Esophagus muscularis mucosa (tissue), 4 donors: ENCODE measurements at regions of chr10 and their contacts with region 1.

Region 1: DNA sequence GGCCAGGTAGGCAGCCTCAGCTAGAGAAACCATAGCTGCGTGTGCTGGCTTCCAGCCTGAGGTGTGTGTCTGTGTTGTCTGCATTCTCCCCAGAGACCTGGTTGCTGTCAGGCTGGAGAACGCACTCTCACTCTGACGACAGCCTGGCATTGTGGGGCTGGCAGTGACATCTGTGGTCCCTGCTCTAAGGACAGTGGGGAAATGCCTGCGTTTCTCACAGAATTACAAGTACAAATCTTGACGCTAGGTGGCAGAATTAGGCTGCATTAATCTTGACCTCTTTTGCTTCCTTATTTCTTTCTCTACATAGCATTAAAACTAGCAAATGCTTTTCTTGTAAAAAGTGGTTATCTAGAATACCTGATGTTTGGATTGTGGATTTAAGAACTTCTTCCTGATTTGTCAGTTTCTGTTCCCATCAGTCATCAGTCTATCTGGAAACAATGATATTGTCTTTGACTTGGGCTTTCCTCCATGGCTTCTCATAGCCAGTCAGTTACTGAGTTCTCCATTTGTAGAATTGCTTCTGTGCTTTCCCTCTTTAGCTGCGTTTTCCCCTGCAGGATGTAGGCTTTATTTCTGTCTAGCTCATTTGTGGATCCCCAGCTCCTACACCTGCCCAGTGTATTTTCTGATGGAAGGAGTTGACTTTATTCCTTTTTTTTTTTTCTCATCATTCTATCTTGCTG is 86.0 kb downstream of the FANK1 start:
- DNase-seq: no peak
- H3K4me3 ChIP-seq: no peak overlapping the region
- H3K27ac ChIP-seq: no peak overlapping the region
- H3K4me1 ChIP-seq: no peaks in the 10 kb centered on the region
- H3K27me3 ChIP-seq: no peaks in the 10 kb centered on the region
- CTCF ChIP-seq: peak; percentile 51 to 61 (median 51)
- EP300 ChIP-seq: no peak
- POLR2A ChIP-seq: no peak

Region 2: DNA sequence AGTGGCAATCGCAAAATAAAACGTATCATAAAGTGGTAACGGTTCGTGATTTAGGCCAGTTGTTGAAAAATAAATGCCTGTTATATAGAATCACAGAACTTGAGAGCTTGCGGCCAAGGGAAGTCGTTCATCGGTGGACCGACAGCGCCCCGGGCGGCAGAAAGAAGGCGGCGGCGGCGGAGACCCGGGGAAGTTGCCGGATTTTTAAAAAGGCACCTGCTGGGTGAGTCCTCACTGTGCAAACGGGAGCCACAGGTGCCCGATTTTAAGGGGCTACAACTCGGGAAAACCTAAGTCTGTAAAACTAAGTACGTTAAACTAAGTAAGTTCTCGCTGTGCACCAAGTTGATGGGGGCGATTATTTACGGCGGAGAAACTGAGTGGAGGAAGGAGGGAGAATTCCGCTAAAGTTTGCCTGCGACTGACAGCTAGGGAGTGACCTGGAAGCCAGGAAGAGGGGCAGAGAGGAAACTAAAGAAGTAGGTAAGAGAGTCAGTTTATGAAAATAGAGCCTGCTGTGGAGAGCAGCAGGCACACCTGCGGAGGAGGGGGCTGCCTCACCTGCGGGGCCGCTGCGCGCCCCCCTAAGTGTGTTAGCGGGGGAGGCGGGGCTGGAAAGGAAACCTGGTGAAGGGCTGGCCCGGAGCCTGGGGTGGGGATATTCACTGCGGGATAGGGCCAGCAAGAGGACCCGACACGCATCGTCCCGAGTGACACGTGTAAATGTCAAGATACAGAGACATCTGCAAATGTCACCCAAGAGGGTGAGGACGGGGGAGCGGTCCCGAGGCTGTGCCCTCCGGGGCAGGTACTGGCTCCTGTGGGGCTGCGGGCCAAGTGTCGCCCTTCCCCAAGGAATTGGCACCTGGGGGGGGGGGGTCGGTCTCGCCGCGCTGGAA is 404.9 kb after region 1 on chr10:
- intact Hi-C with region 1: loop called (anchors 10 kb)
- DNase-seq: peak; percentile 92
- H3K4me3 ChIP-seq: peak overlapping the region; percentile 49 to 62 (median 52)
- H3K27ac ChIP-seq: no peak overlapping the region
- H3K4me1 ChIP-seq: peaks cover 8 to 27% (median 21%) of the 10 kb centered on the region in 4 donors
- H3K27me3 ChIP-seq: peaks cover 0 to 52% (median 4%) of the 10 kb centered on the region in 4 donors
- CTCF ChIP-seq: peak; percentile 47 to 59 (median 55)
- EP300 ChIP-seq: no peak
- POLR2A ChIP-seq: no peak

Region 3: DNA sequence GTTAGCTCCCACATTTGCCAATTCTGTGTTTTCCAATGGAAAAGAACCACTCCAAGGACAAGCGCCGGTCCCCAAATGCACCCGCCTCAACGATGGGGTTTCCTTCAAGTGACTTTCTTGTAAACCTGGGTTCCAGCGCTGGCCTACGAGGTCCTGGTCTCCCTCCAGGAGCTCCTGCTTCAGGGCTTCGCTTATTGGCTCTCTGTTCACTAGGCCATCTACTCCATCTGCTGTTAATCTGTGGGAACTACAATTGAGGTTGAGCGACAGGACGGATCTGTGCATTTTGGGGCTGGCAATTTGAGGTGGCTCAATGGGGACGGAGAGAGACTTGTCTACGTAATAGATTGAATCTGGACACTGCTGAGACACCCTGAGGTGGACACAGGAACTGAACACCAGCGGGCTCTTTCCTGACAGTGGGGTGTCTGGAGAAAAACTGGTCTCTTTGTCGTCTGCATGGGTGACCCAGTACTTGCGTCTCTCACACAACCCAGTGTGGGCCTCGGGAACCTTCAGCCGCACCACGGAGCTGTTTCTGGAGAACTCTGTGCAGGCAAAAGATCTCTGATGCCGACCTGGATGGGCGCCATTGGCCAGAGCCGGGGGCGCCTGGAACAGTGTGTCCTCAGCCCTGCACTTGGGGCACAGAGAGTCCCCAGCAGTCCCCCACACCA is 521.8 kb after region 1 on chr10:
- intact Hi-C with region 1: loop called (anchors 10 kb)
- DNase-seq: peak; percentile 83
- H3K4me3 ChIP-seq: no peak overlapping the region
- H3K27ac ChIP-seq: no peak overlapping the region
- H3K4me1 ChIP-seq: no peaks in the 10 kb centered on the region
- H3K27me3 ChIP-seq: peaks cover 0 to 9% (median 0%) of the 10 kb centered on the region in 4 donors
- CTCF ChIP-seq: peak; percentile 24 to 52 (median 33)
- EP300 ChIP-seq: no peak
- POLR2A ChIP-seq: no peak

Region 4: GRCh38 chr10:126749015-126749655 is 766.7 kb after region 1 on chr10:
- intact Hi-C with region 1: loop called (anchors 2 kb)
- DNase-seq: no peak
- H3K4me3 ChIP-seq: no peak overlapping the region
- H3K27ac ChIP-seq: no peak overlapping the region
- H3K4me1 ChIP-seq: no peaks in the 10 kb centered on the region
- H3K27me3 ChIP-seq: peaks cover 0 to 3% (median 0%) of the 10 kb centered on the region in 4 donors
- CTCF ChIP-seq: peak; percentile 42 to 55 (median 50)
- EP300 ChIP-seq: no peak
- POLR2A ChIP-seq: no peak

Region 5: DNA sequence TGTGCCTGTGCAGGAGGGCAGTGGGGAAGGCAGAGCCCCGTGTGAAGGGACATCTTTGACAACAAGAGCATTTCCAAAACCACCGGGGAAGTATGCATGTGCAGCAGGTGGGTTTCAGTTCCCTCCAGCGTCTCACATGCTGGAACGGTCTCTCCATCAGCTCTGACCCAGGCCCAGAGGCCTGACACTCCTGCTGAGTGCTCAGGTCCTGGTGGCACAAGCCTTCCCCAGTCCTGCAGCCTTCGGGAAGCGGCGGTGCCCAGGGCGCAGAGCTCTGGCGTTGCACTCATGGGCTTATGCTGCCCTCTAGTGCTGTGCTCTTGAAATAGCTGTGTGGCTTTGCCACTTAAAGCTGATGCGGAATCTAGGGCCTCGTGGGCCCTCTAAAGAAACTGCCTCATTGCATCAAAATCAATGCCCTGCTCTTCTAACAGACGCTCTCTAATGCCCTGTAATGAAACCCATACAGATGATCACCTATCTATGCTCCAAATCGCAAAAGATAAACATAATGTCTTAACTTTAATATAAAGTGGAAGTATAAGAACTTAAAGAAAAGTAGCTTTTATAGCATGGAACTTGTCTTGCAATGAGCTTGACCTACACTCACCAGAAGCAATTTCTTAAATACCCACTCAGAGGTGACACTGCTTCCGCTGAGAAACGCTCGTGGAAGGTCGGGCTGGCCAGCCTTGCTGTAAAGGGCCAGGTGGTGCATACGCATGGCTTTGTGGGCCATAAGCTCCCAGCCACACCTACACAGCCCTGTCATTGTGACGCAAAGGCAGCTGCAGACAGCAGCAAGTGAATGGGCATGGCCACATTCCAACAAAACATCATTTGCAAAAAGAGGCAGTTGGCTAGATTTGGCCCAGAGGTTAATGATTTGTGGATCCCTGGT is 1871.7 kb after region 1 on chr10:
- intact Hi-C with region 1: loop called (anchors 5 kb)
- DNase-seq: no peak
- H3K4me3 ChIP-seq: no peak overlapping the region
- H3K27ac ChIP-seq: no peak overlapping the region
- H3K4me1 ChIP-seq: peaks cover 0 to 7% (median 3%) of the 10 kb centered on the region in 4 donors
- H3K27me3 ChIP-seq: peaks cover 0 to 18% (median 0%) of the 10 kb centered on the region in 4 donors
- CTCF ChIP-seq: peak; percentile 63 to 78 (median 73)
- EP300 ChIP-seq: no peak
- POLR2A ChIP-seq: no peak